Gastrocnemius medialis (tissue), 4 donors: ENCODE measurements at regions of chr13 and their contacts with region 1.

Region 1: DNA sequence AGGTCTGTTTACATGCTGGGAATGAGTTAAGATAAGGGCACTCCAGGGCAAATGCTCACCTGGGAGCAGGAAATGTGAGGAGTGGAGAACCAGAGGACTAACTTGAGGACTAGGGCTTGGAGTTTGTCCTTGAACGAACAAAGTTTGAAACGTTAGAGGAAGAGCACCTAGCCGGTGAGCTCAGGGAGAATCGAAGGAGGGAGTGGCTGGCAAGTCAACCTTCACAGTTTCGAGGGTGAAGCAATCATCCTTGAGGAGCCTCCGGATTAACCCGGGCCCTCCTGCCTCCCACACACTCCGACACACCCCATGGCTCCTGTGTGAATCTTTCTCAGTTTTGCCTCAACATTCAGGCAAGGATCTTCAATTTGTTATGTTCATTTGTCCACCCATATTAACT is 58.6 kb downstream of the LMO7 start:
- DNase-seq: no peak
- ATAC-seq: no peak
- H3K4me3 ChIP-seq: no peak overlapping the region
- H3K27ac ChIP-seq: no peak overlapping the region
- H3K4me1 ChIP-seq: peaks cover 0 to 4% of the 10 kb centered on the region in 2 donors
- H3K27me3 ChIP-seq: no peaks in the 10 kb centered on the region
- CTCF ChIP-seq: no peak
- POLR2A ChIP-seq: no peak

Region 2: GRCh38 chr13:75803164-75803611 is 108.5 kb after region 1 on chr13:
- in situ Hi-C with region 1: loop called in 1 of 4 experiments (anchors 10 kb)
- intact Hi-C with region 1: loop called (anchors 1 kb)
- DNase-seq: no peak
- ATAC-seq: peak in 1 of 2 donors; percentile 19
- H3K4me3 ChIP-seq: no peak overlapping the region
- H3K27ac ChIP-seq: peak overlapping the region; percentile 37 to 59 (median 42)
- H3K4me1 ChIP-seq: peaks cover 17 to 24% of the 10 kb centered on the region in 2 donors
- H3K27me3 ChIP-seq: no peaks in the 10 kb centered on the region
- CTCF ChIP-seq: no peak
- POLR2A ChIP-seq: no peak

Region 3: GRCh38 chr13:75838366-75839005 is 143.8 kb after region 1 on chr13:
- in situ Hi-C with region 1: loop called in 1 of 4 experiments (anchors 10 kb)
- intact Hi-C with region 1: loop called (anchors 2 kb)
- DNase-seq: no peak
- ATAC-seq: peak in 1 of 2 donors; percentile 57
- H3K4me3 ChIP-seq: no peak overlapping the region
- H3K27ac ChIP-seq: peak overlapping the region in 2 of 4 donors; percentile 19 to 34
- H3K4me1 ChIP-seq: peaks cover 28 to 32% of the 10 kb centered on the region in 2 donors
- H3K27me3 ChIP-seq: no peaks in the 10 kb centered on the region
- CTCF ChIP-seq: no peak
- POLR2A ChIP-seq: no peak